Astrocyte of the cerebellum (primary cell): ENCODE measurements at regions of chr5 and their contacts with region 1.

Region 1: GRCh38 chr5:136388474-136388873 is 23.1 kb upstream of the TRPC7 start:
- DNase-seq: no peak
- H3K4me3 ChIP-seq: no peak overlapping the region
- CTCF ChIP-seq: no peak

Region 2: DNA sequence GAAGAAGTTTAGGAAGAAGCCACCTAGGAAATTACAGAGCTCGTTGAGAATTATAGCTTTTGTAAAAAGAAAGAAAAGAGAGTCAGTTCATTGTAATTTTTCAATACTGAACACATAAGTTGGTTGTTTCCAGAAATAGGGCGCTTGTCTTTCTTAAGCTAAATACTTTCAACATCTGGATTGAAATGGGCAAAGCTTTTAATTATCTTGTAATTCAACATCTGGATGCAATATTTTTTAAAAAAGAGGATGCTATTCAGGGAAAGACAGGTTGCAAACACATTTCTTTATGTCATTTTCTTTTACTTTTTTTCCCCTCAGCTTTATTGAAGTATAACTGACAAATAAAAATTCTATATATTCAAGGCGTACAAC is 77.6 kb after region 1 on chr5:
- in situ Hi-C with region 1: loop called (anchors 5 kb)
- DNase-seq: no peak
- H3K4me3 ChIP-seq: no peak overlapping the region
- CTCF ChIP-seq: no peak

Region 3: DNA sequence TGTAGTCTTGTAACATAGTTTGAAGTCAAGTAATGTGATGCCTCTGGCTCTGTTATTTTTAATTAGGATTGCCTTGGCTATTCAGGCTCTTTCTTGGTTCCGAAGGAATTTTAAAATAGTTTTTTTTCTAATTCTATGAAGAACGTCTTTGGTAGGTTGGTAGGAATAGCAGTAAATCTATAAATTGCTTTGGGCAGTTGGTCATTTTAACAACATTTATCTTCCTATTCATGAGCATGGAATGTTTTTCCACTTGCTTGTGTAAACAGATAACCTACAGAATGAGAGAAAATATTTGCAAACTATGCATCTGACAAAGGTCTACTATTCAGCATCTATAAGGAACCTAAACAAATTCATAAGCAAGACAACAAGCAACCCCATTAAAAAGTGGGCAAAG is 150.1 kb after region 1 on chr5:
- in situ Hi-C with region 1: no loop called
- DNase-seq: no peak
- H3K4me3 ChIP-seq: no peak overlapping the region
- CTCF ChIP-seq: no peak